Kidney (tissue), 22 donors: ENCODE measurements at regions of chr21 and their contacts with region 1.

Region 1: DNA sequence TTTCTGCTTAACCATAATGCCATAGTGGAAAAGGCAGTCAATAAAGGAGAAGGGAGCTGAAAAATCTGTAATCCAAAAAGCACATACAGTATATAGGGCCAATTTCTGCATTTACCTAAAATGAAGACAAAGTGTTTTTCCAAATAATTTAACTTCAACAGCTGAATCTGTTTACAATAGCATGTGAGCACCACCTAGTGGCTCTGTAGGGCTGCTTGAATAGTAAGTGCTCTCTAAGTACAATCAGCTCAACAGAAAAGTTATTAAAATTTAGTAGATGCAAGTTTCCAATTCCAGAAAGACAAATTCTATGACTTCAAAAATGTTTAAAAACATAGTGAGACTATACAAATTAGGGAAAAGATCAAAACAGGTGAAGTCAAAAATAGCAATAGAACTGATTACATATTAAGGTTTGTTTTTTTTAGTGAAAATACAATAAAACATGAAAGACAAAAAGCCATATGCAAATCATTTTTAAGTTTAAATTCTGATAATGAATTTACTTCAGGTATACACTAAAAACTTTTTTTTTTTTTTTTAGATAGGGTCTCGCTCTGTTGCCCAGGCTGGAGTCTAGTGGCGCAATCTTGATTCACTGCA is 220.0 kb downstream of the SETD4 start:
- DNase-seq: peak in 3 of 5 donors; percentile 56 to 88 (median 79)
- H3K4me3 ChIP-seq: no peak overlapping the region
- H3K27ac ChIP-seq: no peak overlapping the region
- H3K4me1 ChIP-seq: no peaks in the 10 kb centered on the region
- H3K27me3 ChIP-seq: no peaks in the 10 kb centered on the region
- CTCF ChIP-seq: peak; percentile 81

Region 2: DNA sequence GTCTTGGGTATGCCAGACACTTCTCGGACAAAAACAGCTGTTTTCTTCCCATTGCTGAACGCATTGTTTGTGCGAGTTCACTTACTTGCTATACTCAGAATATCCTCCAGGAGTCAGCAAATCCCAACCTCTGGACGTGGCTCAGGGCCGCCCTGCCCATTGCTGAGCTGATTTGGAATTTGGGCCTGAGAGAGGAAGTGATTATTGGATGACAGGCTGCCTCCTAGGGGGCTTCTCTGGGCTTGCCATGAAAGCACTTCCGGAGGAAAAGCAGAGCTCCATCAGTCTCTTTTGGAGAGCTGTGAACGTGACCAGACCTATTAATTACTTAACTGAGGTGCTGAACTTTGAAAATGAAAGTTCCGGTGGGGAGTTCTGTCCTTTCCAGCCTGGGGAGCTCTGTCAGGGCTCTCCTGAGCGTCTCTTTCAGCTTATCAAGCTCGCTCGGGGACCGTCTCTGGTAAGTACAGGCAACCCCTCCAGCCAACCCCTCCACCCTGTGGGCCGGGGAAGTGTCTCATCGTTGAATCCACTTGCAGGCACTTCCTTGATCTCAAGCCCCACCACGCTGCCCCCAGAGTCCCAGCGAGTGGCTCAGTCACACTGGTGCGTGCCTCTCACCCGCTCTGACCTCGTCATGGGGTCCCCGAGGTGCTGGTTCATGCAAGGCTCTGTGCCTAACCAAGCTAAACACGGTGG is 1094.6 kb before region 1 on chr21:
- intact Hi-C with region 1: loop called (anchors 10 kb)
- DNase-seq: peak; percentile 75 to 92 (median 87)
- H3K4me3 ChIP-seq: no peak overlapping the region
- H3K27ac ChIP-seq: no peak overlapping the region
- H3K4me1 ChIP-seq: peaks cover 0 to 5% (median 0%) of the 10 kb centered on the region in 3 donors
- H3K27me3 ChIP-seq: no peaks in the 10 kb centered on the region
- CTCF ChIP-seq: peak; percentile 84